Activated CD4-positive, alpha-beta memory T cell treated with anti-CD3 and anti-CD28 coated beads for 36 hours (primary cell): ENCODE measurements at regions of chr19 and their contacts with region 1.

Region 1: GRCh38 chr19:14218620-14219330 is 12.8 kb upstream of the ADGRL1 start:
- DNase-seq: no peak
- H3K4me3 Mint-ChIP-seq: no peak overlapping the region
- H3K27ac Mint-ChIP-seq: no peak overlapping the region
- H3K4me1 Mint-ChIP-seq: peaks cover 14% of the 10 kb centered on the region
- H3K27me3 Mint-ChIP-seq: no peaks in the 10 kb centered on the region

Region 2: GRCh38 chr19:14167576-14168138 is 51.1 kb before region 1 on chr19:
- CTCF ChIA-PET with region 1: no interaction called
- POLR2A ChIA-PET with region 1: no interaction called
- intact Hi-C with region 1: no loop called
- DNase-seq: peak; percentile 35
- H3K4me3 Mint-ChIP-seq: peak overlapping the region; percentile 59
- H3K27ac Mint-ChIP-seq: peak overlapping the region; percentile 61
- H3K4me1 Mint-ChIP-seq: peaks cover 27% of the 10 kb centered on the region
- H3K27me3 Mint-ChIP-seq: no peaks in the 10 kb centered on the region

Region 3: DNA sequence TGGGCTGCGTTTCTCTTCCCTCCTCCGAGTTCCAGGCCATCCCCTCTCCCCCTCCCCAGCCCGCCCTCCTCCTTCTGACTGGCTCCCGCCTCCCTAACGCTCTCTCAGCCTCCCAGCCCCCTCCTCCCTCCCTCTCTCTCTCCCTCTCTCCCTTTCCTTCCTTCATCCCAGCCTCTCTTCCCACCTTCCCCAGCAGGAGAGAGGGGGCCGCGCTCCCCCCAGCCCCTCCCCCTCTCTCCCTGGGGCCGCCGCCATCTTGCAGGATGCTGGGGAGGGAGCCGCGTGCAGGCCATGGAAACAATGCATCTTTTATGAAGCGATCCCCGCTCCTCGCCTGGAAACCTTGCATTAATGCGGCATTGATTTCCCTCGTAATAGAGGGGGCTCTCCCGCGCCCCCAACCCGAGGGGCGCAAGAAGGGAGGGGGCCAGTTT is 29.8 kb after region 1 on chr19:
- CTCF ChIA-PET with region 1: no interaction called
- POLR2A ChIA-PET with region 1: no interaction called
- intact Hi-C with region 1: loop called (anchors 1 kb)
- DNase-seq: peak; percentile 57
- H3K4me3 Mint-ChIP-seq: peak overlapping the region; percentile 50
- H3K27ac Mint-ChIP-seq: peak overlapping the region; percentile 66
- H3K4me1 Mint-ChIP-seq: peaks cover 4% of the 10 kb centered on the region
- H3K27me3 Mint-ChIP-seq: no peaks in the 10 kb centered on the region

Region 4: DNA sequence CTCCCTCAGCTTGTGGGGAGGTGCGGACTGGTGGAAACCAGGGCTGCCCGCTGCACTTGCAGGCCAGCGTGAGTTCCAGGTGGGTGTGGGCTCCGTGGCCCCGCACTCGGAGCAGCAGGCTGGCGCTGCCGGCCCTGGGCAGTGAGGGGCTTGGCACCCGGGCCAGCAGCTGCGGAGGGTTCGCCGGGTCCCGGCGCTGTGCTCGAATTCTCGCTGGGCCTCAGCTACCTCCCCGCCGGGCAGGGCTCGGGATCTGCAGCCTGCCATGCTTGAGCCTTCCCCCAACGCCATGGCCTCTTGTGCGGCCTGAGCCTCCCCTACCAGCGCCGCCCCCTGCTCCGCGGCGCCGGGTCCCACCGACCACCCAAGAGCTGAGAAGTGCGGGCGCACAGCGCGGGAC is 58.8 kb after region 1 on chr19:
- CTCF ChIA-PET with region 1: interaction called, 3 read pairs
- POLR2A ChIA-PET with region 1: no interaction called
- intact Hi-C with region 1: loop called (anchors 5 kb)
- DNase-seq: no peak
- H3K4me3 Mint-ChIP-seq: no peak overlapping the region
- H3K27ac Mint-ChIP-seq: no peak overlapping the region
- H3K4me1 Mint-ChIP-seq: peaks cover 15% of the 10 kb centered on the region
- H3K27me3 Mint-ChIP-seq: no peaks in the 10 kb centered on the region